Dorsolateral prefrontal cortex (tissue), 120 donors: ENCODE measurements at regions of chr16 and their contacts with region 1.

Region 1: DNA sequence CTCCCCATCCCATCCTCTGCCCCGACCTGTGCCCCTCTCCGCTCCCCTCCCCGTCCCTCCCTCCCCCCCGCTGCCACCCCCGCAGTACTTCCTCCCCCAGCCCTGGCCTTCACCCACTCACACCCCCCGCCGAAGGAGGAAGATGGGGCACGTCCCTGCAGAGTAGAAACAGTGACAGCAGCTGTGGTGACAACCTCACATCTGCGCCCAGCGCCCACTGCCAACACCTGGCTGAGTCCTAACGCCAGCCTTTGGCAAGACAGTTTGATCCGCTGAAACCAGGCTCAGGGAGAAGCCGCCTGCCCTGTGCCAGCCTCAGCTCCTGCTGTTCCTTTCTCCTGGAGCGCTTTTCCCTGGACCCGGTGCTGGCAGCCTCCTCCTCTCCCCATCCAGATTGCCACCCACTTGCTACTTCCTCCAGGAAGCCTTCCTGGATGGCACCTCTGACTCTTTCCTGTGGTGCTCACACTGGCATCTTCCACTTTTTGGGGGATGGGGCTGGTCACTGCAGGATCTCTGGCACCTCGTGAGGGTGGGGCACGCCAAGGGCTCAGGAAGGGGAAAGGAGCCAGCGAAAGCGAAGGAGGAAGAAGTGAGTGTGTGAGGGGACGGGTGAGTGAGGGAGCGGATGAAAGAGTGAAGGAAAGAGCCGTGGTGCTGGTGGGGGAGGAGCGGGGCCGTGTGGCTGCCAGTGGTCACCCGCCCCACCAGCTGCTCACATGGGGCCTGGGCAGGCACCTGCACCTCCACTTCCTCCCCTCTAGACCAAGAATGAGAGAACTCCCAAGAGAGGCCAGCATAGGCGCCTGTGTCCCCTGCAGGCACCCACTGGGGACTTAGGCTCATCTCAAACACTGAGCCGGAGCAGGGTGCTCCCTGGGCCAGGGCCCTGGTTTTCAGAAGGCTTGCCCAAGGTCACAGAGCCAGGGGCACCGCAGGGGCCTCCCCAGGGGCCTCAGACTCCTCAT is 27.0 kb downstream of the ZFPM1 start:
- DNase-seq: no peak
- H3K4me3 ChIP-seq: no peak overlapping the region
- H3K27ac ChIP-seq: no peak overlapping the region
- H3K27me3 ChIP-seq: peaks cover 0 to 4% (median 0%) of the 10 kb centered on the region in 45 donors
- CTCF ChIP-seq: no peak

Region 2: DNA sequence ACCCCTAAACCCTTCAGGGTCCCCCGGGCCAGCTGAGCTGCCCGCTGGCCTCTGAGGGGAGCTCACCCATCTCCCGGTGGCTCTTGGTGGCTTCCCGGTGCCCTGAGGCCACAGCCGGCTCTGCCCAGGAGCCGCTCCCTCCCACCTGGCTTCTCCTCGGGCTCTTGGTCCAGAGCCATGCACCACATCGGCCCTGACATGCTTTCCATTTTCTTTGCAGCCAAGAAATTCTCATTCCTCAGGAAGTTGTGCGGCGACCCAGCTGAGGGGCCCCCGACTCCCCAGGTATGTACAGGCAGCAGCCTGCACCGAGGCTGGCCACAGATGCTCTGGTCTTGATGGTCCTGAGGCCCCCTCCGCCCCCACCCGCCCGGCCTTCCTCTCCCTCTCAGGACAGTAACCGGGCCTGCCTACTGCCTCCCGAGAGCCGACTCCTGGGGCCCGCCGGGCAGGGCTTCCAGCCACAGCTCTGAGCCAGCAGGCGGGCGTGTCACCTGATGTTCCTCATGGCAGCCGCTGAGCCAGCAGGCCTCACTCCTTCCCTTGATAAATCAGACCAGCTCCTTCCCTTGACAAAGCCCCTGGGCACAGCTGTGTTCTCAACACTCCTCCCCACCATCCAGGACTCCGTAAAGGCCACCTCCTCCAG is 55.4 kb before region 1 on chr16:
- intact Hi-C with region 1: loop called in 1 of 2 experiments (anchors 10 kb)
- DNase-seq: peak in 2 of 10 donors; percentile 43 to 63
- H3K4me3 ChIP-seq: no peak overlapping the region
- H3K27ac ChIP-seq: peak overlapping the region in 3 of 59 donors; percentile 2 to 43 (median 18)
- H3K27me3 ChIP-seq: peaks cover 0 to 8% (median 0%) of the 10 kb centered on the region in 45 donors
- CTCF ChIP-seq: no peak

Region 3: DNA sequence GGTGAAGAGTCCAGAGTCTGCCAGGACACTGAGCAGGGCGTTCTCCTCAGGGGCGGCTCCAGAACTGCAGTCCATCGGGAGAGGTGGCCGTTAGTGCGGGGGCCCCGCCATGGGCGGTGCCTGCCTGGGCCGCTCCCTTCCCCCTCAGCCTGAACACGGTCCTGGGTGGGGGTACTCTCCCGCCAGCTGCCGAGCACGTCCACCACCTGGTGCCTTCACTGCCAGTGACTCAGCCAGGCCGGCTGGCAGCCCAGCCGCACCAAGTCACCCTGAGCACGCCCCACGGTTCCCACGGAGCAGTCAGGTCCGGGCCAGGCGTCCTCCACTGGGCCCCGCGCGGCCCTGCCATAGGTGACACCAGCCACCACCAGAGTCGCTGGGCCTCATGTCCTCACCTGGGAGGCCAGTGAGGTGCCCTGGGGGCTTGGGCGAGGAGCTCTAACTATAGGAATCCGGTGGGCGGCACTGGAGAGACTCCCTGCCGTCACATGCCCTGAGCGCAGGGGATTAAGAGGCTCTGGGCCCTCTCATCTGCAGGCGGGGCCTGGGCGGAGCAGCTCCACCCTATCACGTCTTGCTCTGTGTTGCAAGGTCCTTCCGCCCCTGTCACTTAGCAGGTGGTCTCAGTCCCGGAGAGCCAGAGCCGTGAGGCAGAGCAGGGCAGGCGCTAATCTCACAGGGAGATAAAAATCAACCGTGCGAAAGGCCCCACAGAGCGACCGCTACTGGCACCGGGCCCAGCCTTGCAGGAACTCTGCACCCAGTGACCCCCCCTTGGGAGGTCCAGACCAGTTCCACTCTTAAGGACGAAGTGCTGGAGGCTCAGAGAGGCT is 290.6 kb after region 1 on chr16:
- intact Hi-C with region 1: no loop called
- DNase-seq: no peak
- H3K4me3 ChIP-seq: no peak overlapping the region
- H3K27ac ChIP-seq: no peak overlapping the region
- H3K27me3 ChIP-seq: no peaks in the 10 kb centered on the region
- CTCF ChIP-seq: no peak

Region 4: DNA sequence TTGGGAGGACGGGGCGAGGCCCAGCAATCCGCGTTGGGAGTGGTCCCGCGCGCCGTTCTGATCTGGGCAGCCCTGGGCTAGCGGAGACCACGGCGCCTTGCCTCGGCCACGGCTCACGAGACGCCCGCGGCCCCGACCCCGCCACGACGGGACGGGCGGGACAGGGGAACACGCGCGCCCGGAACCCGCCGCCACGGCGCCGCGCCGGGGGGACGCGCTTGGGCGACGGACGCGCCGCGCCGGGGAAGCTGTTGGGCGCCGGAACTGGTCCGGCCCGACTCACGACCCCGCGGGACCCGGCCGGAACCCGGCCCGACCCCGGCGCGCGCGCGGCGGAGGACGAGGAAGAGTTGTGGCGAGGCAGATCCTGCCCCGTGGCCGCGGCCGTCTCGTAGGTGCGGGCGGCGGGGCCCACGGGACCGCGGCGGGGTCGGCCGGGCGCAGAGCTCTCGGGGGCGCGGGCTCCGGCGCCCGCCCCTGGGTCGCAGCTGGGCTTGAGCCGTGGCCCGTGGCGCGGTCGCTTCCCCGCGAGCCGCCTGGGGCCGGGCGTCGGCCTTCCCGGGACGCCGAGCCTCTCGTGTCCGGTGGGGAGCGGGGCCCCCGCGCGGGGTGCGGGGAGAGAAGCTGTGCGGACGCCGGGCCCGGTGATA is 613.6 kb after region 1 on chr16 and contains the start of gene ACSF3:
- intact Hi-C with region 1: no loop called
- DNase-seq: peak in 7 of 10 donors; percentile 14 to 87 (median 60)
- H3K4me3 ChIP-seq: peak within 1 kb of the TSS; percentile 60 to 96 (median 80)
- H3K27ac ChIP-seq: peak within 1 kb of the TSS in 21 of 59 donors; percentile 27 to 87 (median 64)
- H3K27me3 ChIP-seq: peaks cover 0 to 28% (median 11%) of the 10 kb centered on the region in 45 donors
- CTCF ChIP-seq: peak in 5 of 56 donors; percentile 11 to 35 (median 27)
- total RNA-seq, gene ACSF3: 20.4 to 51.9 (median 33.6) TPM